ENCODE measurements at regions of chr7 and their contacts with region 1.

Region 1: DNA sequence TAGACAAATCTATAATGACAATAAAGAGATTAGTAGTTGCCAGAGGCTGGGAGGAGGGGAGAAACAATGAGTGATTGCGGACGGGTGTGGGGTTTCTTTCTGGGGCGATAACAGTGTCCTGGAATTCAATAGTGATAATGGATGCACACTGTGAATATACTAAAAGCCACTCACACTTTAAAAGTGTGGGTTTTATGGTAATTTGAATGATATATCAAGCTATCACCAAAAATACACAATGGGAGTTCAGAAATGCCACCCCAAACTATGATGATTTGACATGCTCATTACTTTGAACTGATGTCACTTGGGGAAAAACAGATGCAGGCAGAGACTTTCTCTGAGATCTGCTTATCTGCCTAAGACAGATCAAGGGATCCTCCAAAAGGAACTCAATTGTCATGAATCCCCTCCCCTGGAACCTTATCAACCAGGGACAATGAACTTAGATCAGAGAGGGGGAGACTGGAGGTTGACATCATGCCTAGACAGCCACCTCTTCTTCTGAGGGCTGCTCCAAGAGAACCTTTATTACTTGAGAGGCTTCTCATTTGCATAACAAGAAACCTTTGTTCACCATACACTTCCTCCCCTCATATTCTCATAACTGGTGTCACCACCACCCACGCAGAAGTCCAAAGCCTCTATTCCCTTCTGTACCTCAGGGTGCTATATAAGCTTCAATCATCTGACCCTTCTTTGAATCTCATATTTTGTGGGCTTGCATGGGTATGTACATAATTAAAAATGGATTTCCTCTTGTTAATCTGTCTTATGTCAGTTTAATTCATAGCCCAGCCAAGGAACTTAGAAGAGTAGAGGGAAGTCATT is 14.8 kb upstream of the ZC3HAV1 start:
- DNase-seq: no peak
- ATAC-seq: no peak
- H3K4me3 ChIP-seq: no peak overlapping the region
- H3K4me3 Mint-ChIP-seq: no peak overlapping the region
- H3K27ac ChIP-seq: no peak overlapping the region
- H3K27ac Mint-ChIP-seq: no peak overlapping the region
- H3K4me1 ChIP-seq: peaks cover 7% of the 10 kb centered on the region
- H3K4me1 Mint-ChIP-seq: peaks cover 18% of the 10 kb centered on the region
- H3K27me3 ChIP-seq: no peaks in the 10 kb centered on the region
- H3K27me3 Mint-ChIP-seq: no peaks in the 10 kb centered on the region
- CTCF ChIP-seq: no peak

Region 2: DNA sequence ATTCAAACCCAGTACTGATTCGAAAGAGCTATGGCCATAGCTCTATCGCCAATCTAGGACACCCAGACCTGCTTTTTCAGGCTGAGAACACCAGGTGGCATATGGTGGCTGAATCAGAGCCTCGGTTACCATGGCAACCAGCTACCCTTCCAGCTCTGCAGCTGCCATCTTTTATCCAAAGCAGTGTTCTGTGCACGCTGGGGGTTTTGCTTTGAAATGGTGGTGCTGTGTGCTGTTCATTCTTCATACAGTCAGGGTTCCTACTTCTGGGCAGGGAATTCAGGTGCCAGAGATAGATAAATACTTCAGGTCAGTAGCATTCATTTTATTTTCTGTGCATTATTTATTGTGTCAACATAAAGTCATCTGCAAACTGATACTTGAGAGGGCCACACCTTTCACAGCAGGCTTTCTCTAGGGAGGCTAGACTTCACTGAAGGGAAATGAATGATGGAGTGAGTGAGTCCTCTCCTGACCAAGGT is 962.7 kb before region 1 on chr7:
- CTCF ChIA-PET with region 1: no interaction called
- POLR2A ChIA-PET with region 1: no interaction called
- intact Hi-C with region 1: loop called in 1 of 2 experiments (anchors 10 kb)
- DNase-seq: peak; percentile 42 to 93 (median 74)
- ATAC-seq: peak; percentile 99
- H3K4me3 ChIP-seq: no peak overlapping the region
- H3K4me3 Mint-ChIP-seq: no peak overlapping the region
- H3K27ac ChIP-seq: no peak overlapping the region
- H3K27ac Mint-ChIP-seq: no peak overlapping the region
- H3K4me1 ChIP-seq: peaks cover 5% of the 10 kb centered on the region
- H3K4me1 Mint-ChIP-seq: no peaks in the 10 kb centered on the region
- H3K27me3 ChIP-seq: no peaks in the 10 kb centered on the region
- H3K27me3 Mint-ChIP-seq: peaks cover 3% of the 10 kb centered on the region
- CTCF ChIP-seq: peak; percentile 69

Region 3: GRCh38 chr7:138992052-138992531 is 132.2 kb before region 1 on chr7:
- CTCF ChIA-PET with region 1: no interaction called
- POLR2A ChIA-PET with region 1: no interaction called
- intact Hi-C with region 1: no loop called
- DNase-seq: no peak
- ATAC-seq: no peak
- H3K4me3 ChIP-seq: no peak overlapping the region
- H3K4me3 Mint-ChIP-seq: no peak overlapping the region
- H3K27ac ChIP-seq: no peak overlapping the region
- H3K27ac Mint-ChIP-seq: no peak overlapping the region
- H3K4me1 ChIP-seq: no peaks in the 10 kb centered on the region
- H3K4me1 Mint-ChIP-seq: no peaks in the 10 kb centered on the region
- H3K27me3 ChIP-seq: no peaks in the 10 kb centered on the region
- H3K27me3 Mint-ChIP-seq: peaks cover 5% of the 10 kb centered on the region
- CTCF ChIP-seq: no peak

Region 4: GRCh38 chr7:139023076-139023475 is 101.2 kb before region 1 on chr7:
- CTCF ChIA-PET with region 1: interaction called, 87 read pairs
- POLR2A ChIA-PET with region 1: no interaction called
- intact Hi-C with region 1: no loop called
- DNase-seq: no peak
- ATAC-seq: no peak
- H3K4me3 ChIP-seq: no peak overlapping the region
- H3K4me3 Mint-ChIP-seq: no peak overlapping the region
- H3K27ac ChIP-seq: no peak overlapping the region
- H3K27ac Mint-ChIP-seq: no peak overlapping the region
- H3K4me1 ChIP-seq: no peaks in the 10 kb centered on the region
- H3K4me1 Mint-ChIP-seq: peaks cover 2% of the 10 kb centered on the region
- H3K27me3 ChIP-seq: no peaks in the 10 kb centered on the region
- H3K27me3 Mint-ChIP-seq: no peaks in the 10 kb centered on the region
- CTCF ChIP-seq: no peak

Region 5: DNA sequence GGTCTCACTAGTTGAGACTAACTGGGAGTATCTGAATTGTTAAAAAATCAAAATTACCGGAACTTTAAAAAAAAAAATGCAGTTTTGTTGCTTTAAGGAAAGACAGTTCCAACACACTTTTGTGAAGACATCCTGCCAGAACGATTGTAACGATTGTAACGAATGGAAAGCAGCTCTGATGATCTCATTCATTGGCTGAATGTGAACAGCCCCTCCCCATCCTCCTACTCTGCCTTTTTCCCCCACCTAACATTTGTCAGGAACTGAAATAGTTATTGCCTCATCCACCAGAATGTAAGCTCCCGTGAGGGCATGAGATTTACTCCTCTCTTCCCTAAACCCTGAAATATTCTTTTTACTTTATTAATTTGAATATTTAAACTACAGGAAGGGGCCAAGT is 65.4 kb before region 1 on chr7:
- CTCF ChIA-PET with region 1: interaction called, 13 read pairs
- POLR2A ChIA-PET with region 1: no interaction called
- intact Hi-C with region 1: no loop called
- DNase-seq: no peak
- ATAC-seq: no peak
- H3K4me3 ChIP-seq: no peak overlapping the region
- H3K4me3 Mint-ChIP-seq: no peak overlapping the region
- H3K27ac ChIP-seq: peak overlapping the region in 1 of 2 experiments; percentile 12
- H3K27ac Mint-ChIP-seq: peak overlapping the region; percentile 81
- H3K4me1 ChIP-seq: peaks cover 21% of the 10 kb centered on the region
- H3K4me1 Mint-ChIP-seq: peaks cover 55% of the 10 kb centered on the region
- H3K27me3 ChIP-seq: no peaks in the 10 kb centered on the region
- H3K27me3 Mint-ChIP-seq: no peaks in the 10 kb centered on the region
- CTCF ChIP-seq: no peak

Region 6: DNA sequence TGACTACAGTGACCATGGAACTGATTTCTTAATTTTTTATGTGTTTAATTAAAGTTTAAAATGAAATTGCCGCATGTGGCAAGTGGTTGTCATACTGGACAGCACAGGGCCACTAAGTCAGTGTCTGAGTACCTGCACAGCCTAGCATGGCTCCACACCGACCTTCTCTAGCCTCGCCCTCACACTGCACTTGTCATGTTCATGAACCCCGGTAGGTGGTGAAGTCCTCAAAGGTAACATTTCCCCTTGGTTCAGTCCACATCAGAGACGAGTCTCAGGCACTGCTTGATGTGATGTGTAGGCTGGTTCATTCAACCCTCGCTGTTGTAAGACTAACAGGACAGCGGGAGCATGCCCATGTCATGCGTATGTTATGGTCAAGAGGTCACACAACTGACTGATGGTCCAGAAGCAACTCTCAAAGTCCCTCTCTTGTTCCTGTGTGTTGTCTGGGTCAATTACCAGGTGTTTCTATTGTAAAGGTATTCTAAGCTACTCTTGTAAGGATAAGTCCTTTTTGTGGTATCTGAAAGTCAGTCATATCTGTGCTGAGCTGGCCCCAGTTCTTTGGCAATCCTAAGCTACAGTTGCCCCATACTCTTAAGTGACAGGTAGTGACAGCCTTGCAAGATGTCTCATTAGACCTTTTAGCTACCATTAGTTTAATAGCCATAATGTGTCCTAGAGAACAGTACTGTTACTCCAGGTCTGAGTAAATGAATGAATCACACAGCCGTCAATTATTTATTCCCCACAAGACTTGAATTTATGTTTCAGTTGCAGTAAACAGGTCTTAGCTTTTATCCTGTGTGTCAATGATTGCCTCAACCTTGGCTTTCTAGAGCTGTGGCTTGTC is 55.5 kb before region 1 on chr7:
- CTCF ChIA-PET with region 1: interaction called, 13 read pairs
- POLR2A ChIA-PET with region 1: no interaction called
- intact Hi-C with region 1: no loop called
- DNase-seq: peak in 4 of 9 experiments; percentile 30 to 51 (median 41)
- ATAC-seq: peak; percentile 71
- H3K4me3 ChIP-seq: no peak overlapping the region
- H3K4me3 Mint-ChIP-seq: no peak overlapping the region
- H3K27ac ChIP-seq: no peak overlapping the region
- H3K27ac Mint-ChIP-seq: peak overlapping the region; percentile 29
- H3K4me1 ChIP-seq: peaks cover 42% of the 10 kb centered on the region
- H3K4me1 Mint-ChIP-seq: peaks cover 65% of the 10 kb centered on the region
- H3K27me3 ChIP-seq: no peaks in the 10 kb centered on the region
- H3K27me3 Mint-ChIP-seq: no peaks in the 10 kb centered on the region
- CTCF ChIP-seq: no peak

Region 7: DNA sequence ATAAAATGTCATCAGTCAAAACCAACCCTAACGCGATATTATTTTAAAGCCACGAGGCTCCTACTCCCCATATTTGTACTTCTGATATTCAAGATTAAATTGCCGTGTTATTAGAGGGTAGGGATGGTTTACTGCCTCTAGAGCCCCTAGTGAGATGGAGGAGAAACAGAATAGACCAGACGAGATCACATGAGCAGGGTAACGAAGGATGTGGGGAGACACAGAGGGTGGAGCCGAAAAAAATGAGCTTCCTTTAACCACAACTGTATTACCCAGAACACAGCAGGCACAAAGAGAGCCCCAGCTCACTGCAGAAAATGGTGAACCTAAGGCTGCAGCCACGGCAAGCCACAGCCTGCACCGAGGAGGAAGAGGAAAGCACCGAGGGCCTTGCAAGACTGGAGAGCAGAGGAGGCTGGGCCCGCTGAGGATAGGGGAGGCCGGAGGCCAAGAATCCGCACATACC is 29.1 kb before region 1 on chr7:
- CTCF ChIA-PET with region 1: interaction called, 13 read pairs
- POLR2A ChIA-PET with region 1: interaction called, 13 read pairs
- intact Hi-C with region 1: loop called in 1 of 2 experiments (anchors 2 kb)
- DNase-seq: peak; percentile 57 to 96 (median 82)
- ATAC-seq: peak; percentile 84
- H3K4me3 ChIP-seq: peak overlapping the region; percentile 34 to 53
- H3K4me3 Mint-ChIP-seq: peak overlapping the region; percentile 84
- H3K27ac ChIP-seq: peak overlapping the region; percentile 61 to 76
- H3K27ac Mint-ChIP-seq: peak overlapping the region; percentile 95
- H3K4me1 ChIP-seq: peaks cover 82% of the 10 kb centered on the region
- H3K4me1 Mint-ChIP-seq: peaks cover 86% of the 10 kb centered on the region
- H3K27me3 ChIP-seq: no peaks in the 10 kb centered on the region
- H3K27me3 Mint-ChIP-seq: no peaks in the 10 kb centered on the region
- CTCF ChIP-seq: no peak